ENCODE measurements at regions of chr2 and their contacts with region 1.

Region 1: GRCh38 chr2:62297624-62298010 is 101.7 kb downstream of the B3GNT2 start:
- DNase-seq: peak; percentile 57 to 86 (median 67)
- ATAC-seq: peak; percentile 77
- H3K4me3 ChIP-seq: peak overlapping the region; percentile 41
- H3K27ac ChIP-seq: peak overlapping the region; percentile 89
- H3K4me1 ChIP-seq: peaks cover 37 to 61% of the 10 kb centered on the region in 2 experiments; a peak in 4 of 5 replicates
- H3K27me3 ChIP-seq: no peaks in the 10 kb centered on the region
- CTCF ChIP-seq: peak; percentile 70 to 86 (median 85)
- EP300 ChIP-seq: no peak
- POLR2A ChIP-seq: no peak
- RAD21 ChIP-seq: peak; percentile 68 to 76

Region 2: GRCh38 chr2:61949714-61950560 is 347.7 kb before region 1 on chr2:
- CTCF ChIA-PET with region 1: no interaction called
- POLR2A ChIA-PET with region 1: no interaction called
- in situ Hi-C with region 1: no loop called
- intact Hi-C with region 1: no loop called
- DNase-seq: no peak
- ATAC-seq: no peak
- H3K4me3 ChIP-seq: no peak overlapping the region
- H3K27ac ChIP-seq: no peak overlapping the region
- H3K4me1 ChIP-seq: no peaks in the 10 kb centered on the region
- H3K27me3 ChIP-seq: no peaks in the 10 kb centered on the region
- CTCF ChIP-seq: no peak
- EP300 ChIP-seq: no peak
- POLR2A ChIP-seq: no peak
- RAD21 ChIP-seq: no peak

Region 3: GRCh38 chr2:61993444-61994024 is 304.1 kb before region 1 on chr2:
- CTCF ChIA-PET with region 1: no interaction called
- POLR2A ChIA-PET with region 1: interaction called, 3 read pairs
- in situ Hi-C with region 1: no loop called
- intact Hi-C with region 1: loop called (anchors 1 kb)
- DNase-seq: peak; percentile 26 to 68 (median 41)
- ATAC-seq: peak; percentile 87
- H3K4me3 ChIP-seq: no peak overlapping the region
- H3K27ac ChIP-seq: no peak overlapping the region
- H3K4me1 ChIP-seq: peaks cover 0 to 12% of the 10 kb centered on the region in 2 experiments; a peak in 3 of 5 replicates
- H3K27me3 ChIP-seq: no peaks in the 10 kb centered on the region
- CTCF ChIP-seq: peak; percentile 55 to 91 (median 71); a peak in 5 of 6 replicates
- EP300 ChIP-seq: no peak
- POLR2A ChIP-seq: no peak
- RAD21 ChIP-seq: peak; percentile 91 to 94

Region 4: DNA sequence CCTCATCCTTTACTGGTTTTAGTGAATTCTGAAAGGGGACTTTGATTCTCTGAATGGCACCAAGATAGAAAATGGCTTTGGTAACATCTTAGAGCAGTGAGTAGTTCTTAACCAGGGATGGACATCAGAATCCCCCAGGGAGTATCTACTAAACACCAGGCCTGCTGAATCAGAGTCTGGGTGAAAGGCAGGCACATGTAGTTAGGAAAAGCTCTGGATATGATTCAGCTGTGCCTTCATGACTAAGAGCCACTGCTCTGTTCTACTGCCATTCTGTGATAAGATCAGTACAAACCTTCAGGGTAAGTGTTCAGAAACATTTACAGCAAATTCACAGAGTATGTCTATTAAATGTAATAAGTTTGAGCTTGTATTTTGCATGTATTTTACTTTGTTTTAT is 147.9 kb before region 1 on chr2:
- CTCF ChIA-PET with region 1: no interaction called
- POLR2A ChIA-PET with region 1: no interaction called
- in situ Hi-C with region 1: no loop called
- intact Hi-C with region 1: loop called (anchors 5 kb)
- DNase-seq: peak in 3 of 4 experiments; percentile 16 to 47 (median 17)
- ATAC-seq: peak; percentile 69
- H3K4me3 ChIP-seq: no peak overlapping the region
- H3K27ac ChIP-seq: no peak overlapping the region
- H3K4me1 ChIP-seq: peaks cover 0 to 7% of the 10 kb centered on the region in 2 experiments; a peak in 2 of 5 replicates
- H3K27me3 ChIP-seq: no peaks in the 10 kb centered on the region
- CTCF ChIP-seq: no peak
- EP300 ChIP-seq: no peak
- POLR2A ChIP-seq: no peak
- RAD21 ChIP-seq: no peak

Region 5: GRCh38 chr2:62163106-62163831 is 134.3 kb before region 1 on chr2:
- CTCF ChIA-PET with region 1: no interaction called
- POLR2A ChIA-PET with region 1: no interaction called
- in situ Hi-C with region 1: no loop called
- intact Hi-C with region 1: no loop called
- DNase-seq: peak in 3 of 4 experiments; percentile 57 to 65 (median 60)
- ATAC-seq: peak; percentile 70
- H3K4me3 ChIP-seq: no peak overlapping the region
- H3K27ac ChIP-seq: no peak overlapping the region
- H3K4me1 ChIP-seq: peaks cover 0 to 14% of the 10 kb centered on the region in 2 experiments; a peak in 4 of 5 replicates
- H3K27me3 ChIP-seq: no peaks in the 10 kb centered on the region
- CTCF ChIP-seq: no peak
- EP300 ChIP-seq: no peak
- POLR2A ChIP-seq: no peak
- RAD21 ChIP-seq: no peak

Region 6: GRCh38 chr2:62195421-62196277 is 102.0 kb before region 1 on chr2 and contains the start of gene B3GNT2:
- CTCF ChIA-PET with region 1: no interaction called
- POLR2A ChIA-PET with region 1: no interaction called
- in situ Hi-C with region 1: no loop called
- intact Hi-C with region 1: loop called (anchors 2 kb)
- DNase-seq: peak; percentile 86 to 95 (median 94)
- ATAC-seq: peak; percentile 83
- H3K4me3 ChIP-seq: peak within 1 kb of the TSS; percentile 79
- H3K27ac ChIP-seq: peak within 1 kb of the TSS; percentile 70
- H3K4me1 ChIP-seq: peaks cover 28 to 30% of the 10 kb centered on the region in 2 experiments
- H3K27me3 ChIP-seq: no peaks in the 10 kb centered on the region
- CTCF ChIP-seq: 0 out of 6 replicates have a peak, but pooled peaks of 1 of the 3 experiments have one; percentile 1
- EP300 ChIP-seq: no peak
- POLR2A ChIP-seq: peak; percentile 69
- RAD21 ChIP-seq: no peak
- polyA plus RNA-seq, gene B3GNT2: 6.0 to 8.0 TPM

Region 7: DNA sequence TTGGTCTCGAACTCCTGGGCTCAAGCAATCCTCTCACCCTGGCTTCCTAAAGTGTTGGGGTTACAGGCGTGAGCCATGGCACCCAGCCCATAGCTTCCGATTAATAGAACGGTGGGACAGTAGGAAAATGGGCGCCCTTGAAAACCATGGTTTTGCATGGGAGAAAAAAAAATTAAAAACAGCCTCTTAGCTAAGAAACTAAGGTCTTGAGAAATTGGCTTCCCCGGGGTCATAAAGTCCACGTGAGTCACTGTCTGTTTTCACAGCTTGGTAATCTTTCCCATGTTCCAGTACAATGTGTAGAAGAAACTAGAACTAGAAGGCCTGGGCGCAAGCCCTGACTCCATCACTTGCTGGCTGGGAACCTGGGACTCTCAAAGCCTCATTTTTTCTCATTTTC is 81.0 kb before region 1 on chr2:
- CTCF ChIA-PET with region 1: no interaction called
- POLR2A ChIA-PET with region 1: no interaction called
- in situ Hi-C with region 1: no loop called
- intact Hi-C with region 1: loop called (anchors 5 kb)
- DNase-seq: peak in 1 of 4 experiments; percentile 26
- ATAC-seq: no peak
- H3K4me3 ChIP-seq: no peak overlapping the region
- H3K27ac ChIP-seq: no peak overlapping the region
- H3K4me1 ChIP-seq: peaks cover 16 to 42% of the 10 kb centered on the region in 2 experiments
- H3K27me3 ChIP-seq: no peaks in the 10 kb centered on the region
- CTCF ChIP-seq: no peak
- EP300 ChIP-seq: no peak
- POLR2A ChIP-seq: no peak
- RAD21 ChIP-seq: no peak